Transverse colon (tissue), 4 donors: ENCODE measurements at regions of chr10 and their contacts with region 1.

Region 1: GRCh38 chr10:89793649-89794254 is 92.4 kb downstream of the KIF20B start:
- DNase-seq: no peak
- H3K4me3 ChIP-seq: no peak overlapping the region
- H3K27ac ChIP-seq: no peak overlapping the region
- H3K4me1 ChIP-seq: no peaks in the 10 kb centered on the region
- H3K27me3 ChIP-seq: no peaks in the 10 kb centered on the region
- CTCF ChIP-seq: peak; percentile 67 to 76 (median 75)
- EP300 ChIP-seq: no peak
- POLR2A ChIP-seq: no peak

Region 2: DNA sequence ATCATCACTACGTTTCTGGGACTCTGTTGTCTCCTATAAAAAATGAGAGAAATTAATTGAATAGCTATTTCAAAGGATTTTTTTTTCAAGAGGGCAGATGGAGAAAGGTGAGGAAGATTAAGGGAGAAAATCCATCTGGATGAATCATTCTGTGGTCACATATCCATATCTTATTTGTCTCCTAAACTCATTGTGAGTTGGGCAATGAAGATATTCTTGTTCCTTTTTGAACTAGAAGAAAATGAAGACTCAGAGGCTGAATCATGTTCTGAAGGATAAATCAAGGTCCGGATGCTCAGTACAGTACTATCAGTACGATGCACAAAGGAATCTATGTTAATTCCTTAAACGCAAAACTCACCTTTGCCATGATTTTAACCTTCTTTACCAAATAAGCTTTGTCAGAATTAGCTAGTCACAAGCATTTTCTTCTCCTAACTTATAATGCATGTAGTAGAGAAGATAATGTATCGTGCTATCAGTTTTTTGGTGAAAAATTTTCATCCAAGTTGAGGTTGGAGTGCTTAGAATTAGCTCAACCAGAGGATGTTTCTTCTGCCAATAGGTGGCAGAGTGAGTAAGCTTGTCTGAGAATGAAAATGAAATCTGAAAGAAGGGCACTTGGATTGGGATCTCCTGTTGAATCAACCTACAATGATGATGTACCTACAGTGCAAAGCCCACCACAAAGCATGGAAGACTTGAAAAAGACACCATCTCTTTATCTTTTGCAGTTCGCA is 354.5 kb after region 1 on chr10:
- in situ Hi-C with region 1: loop called in 2 of 4 experiments (anchors 25 kb)
- intact Hi-C with region 1: no loop called
- DNase-seq: no peak
- H3K4me3 ChIP-seq: no peak overlapping the region
- H3K27ac ChIP-seq: no peak overlapping the region
- H3K4me1 ChIP-seq: no peaks in the 10 kb centered on the region
- H3K27me3 ChIP-seq: no peaks in the 10 kb centered on the region
- CTCF ChIP-seq: peak in 1 of 5 experiments; percentile 15
- EP300 ChIP-seq: no peak
- POLR2A ChIP-seq: no peak

Region 3: GRCh38 chr10:90592638-90593302 is 799.0 kb after region 1 on chr10:
- in situ Hi-C with region 1: loop called in 1 of 4 experiments (anchors 25 kb)
- intact Hi-C with region 1: no loop called
- DNase-seq: no peak
- H3K4me3 ChIP-seq: no peak overlapping the region
- H3K27ac ChIP-seq: no peak overlapping the region
- H3K4me1 ChIP-seq: no peaks in the 10 kb centered on the region
- H3K27me3 ChIP-seq: no peaks in the 10 kb centered on the region
- CTCF ChIP-seq: peak in 1 of 5 experiments; percentile 12
- EP300 ChIP-seq: no peak
- POLR2A ChIP-seq: no peak

Region 4: GRCh38 chr10:90787393-90788198 is 993.8 kb after region 1 on chr10:
- in situ Hi-C with region 1: loop called in 1 of 4 experiments (anchors 25 kb)
- intact Hi-C with region 1: loop called (anchors 10 kb)
- DNase-seq: peak; percentile 13
- H3K4me3 ChIP-seq: no peak overlapping the region
- H3K27ac ChIP-seq: no peak overlapping the region
- H3K4me1 ChIP-seq: no peaks in the 10 kb centered on the region
- H3K27me3 ChIP-seq: no peaks in the 10 kb centered on the region
- CTCF ChIP-seq: peak; percentile 31 to 64 (median 56)
- EP300 ChIP-seq: no peak
- POLR2A ChIP-seq: no peak